PC-9 (cell line): ENCODE measurements at regions of chr20 and their contacts with region 1.

Region 1: DNA sequence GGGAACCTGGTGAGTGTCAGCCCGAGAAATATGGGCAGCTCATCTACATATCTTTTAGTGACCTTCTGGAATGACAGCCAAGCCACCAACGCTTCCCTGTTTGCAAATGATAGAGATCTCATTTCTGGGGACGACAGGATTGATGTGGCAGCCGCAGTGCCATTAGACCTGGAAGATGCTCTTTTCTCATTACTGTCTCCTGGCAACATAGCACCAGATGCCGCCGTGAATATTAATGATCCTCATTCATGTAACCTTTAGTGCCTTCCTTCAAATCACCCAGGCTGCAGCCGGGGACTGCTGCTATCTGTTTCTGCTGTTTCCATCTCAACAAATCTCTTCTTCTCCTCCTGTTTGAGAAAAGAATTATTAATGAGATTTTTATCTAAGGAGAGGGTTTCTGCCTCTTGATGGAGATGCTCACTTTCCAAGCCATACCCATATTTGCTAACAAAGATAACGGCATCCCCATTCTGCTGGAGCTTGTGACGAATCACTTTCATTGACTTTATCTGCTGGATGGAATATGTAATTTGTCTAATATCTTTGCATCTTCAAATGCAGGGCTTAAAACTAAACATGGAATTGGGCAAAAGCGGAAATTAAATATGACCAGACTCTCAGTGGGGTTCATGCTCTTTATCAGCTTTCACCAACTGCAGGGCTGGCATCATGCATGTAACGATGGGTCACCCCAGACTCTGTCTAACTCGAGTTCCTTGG is 74.8 kb upstream of the KIF16B start:
- DNase-seq: no peak
- H3K4me3 ChIP-seq: no peak overlapping the region
- H3K27ac ChIP-seq: no peak overlapping the region
- H3K4me1 ChIP-seq: no peaks in the 10 kb centered on the region
- H3K27me3 ChIP-seq: peaks cover 39% of the 10 kb centered on the region
- CTCF ChIP-seq: no peak

Region 2: GRCh38 chr20:15317546-15318232 is 1330.3 kb before region 1 on chr20:
- CTCF ChIA-PET with region 1: no interaction called
- POLR2A ChIA-PET with region 1: interaction called, 19 read pairs
- intact Hi-C with region 1: no loop called
- DNase-seq: no peak
- H3K4me3 ChIP-seq: no peak overlapping the region
- H3K27ac ChIP-seq: no peak overlapping the region
- H3K4me1 ChIP-seq: no peaks in the 10 kb centered on the region
- H3K27me3 ChIP-seq: no peaks in the 10 kb centered on the region
- CTCF ChIP-seq: no peak

Region 3: GRCh38 chr20:16942756-16943155 is 294.7 kb after region 1 on chr20:
- CTCF ChIA-PET with region 1: no interaction called
- POLR2A ChIA-PET with region 1: no interaction called
- intact Hi-C with region 1: no loop called
- DNase-seq: no peak
- H3K4me3 ChIP-seq: no peak overlapping the region
- H3K27ac ChIP-seq: no peak overlapping the region
- H3K4me1 ChIP-seq: no peaks in the 10 kb centered on the region
- H3K27me3 ChIP-seq: no peaks in the 10 kb centered on the region; the same call in none of the 2 replicates
- CTCF ChIP-seq: no peak